OCI-LY7 (cell line): ENCODE measurements at regions of chr2 and their contacts with region 1.

Region 1: DNA sequence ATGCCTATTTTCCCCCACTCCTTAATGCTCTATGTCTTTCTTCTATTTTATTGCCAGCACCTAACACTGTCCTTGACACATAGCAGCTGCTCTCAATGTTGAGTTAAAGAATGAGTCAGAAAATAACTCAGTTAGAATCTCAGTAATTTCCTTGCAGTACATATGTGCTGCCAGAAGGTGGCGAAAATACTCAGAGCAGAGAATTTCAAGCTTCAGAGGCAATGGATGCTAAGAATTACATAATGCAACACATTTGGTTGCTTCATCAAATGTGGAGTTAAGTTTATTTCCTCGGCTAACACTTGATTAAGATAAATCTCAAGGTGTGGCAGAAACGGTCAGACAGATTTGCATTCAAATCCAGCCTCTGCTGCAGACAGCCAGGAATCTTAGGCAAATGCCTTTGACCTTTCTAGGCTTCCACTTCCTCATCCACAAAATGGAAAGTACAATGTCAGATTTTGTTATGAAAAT is 105.6 kb downstream of the VSNL1 start:
- DNase-seq: peak; percentile 68
- H3K4me3 ChIP-seq: no peak overlapping the region
- H3K27ac ChIP-seq: no peak overlapping the region
- H3K4me1 ChIP-seq: peaks cover 5% of the 10 kb centered on the region
- CTCF ChIP-seq: peak; percentile 97

Region 2: GRCh38 chr2:17104454-17104853 is 541.7 kb before region 1 on chr2:
- CTCF ChIA-PET with region 1: no interaction called
- POLR2A ChIA-PET with region 1: no interaction called
- intact Hi-C with region 1: no loop called
- DNase-seq: no peak
- H3K4me3 ChIP-seq: no peak overlapping the region
- H3K27ac ChIP-seq: no peak overlapping the region
- H3K4me1 ChIP-seq: peaks cover 4% of the 10 kb centered on the region
- CTCF ChIP-seq: no peak

Region 3: GRCh38 chr2:17557596-17557995 is 88.5 kb before region 1 on chr2:
- CTCF ChIA-PET with region 1: no interaction called
- POLR2A ChIA-PET with region 1: no interaction called
- intact Hi-C with region 1: no loop called
- DNase-seq: no peak
- H3K4me3 ChIP-seq: no peak overlapping the region
- H3K27ac ChIP-seq: no peak overlapping the region
- H3K4me1 ChIP-seq: no peaks in the 10 kb centered on the region
- CTCF ChIP-seq: no peak

Region 4: GRCh38 chr2:17918789-17919188 is 272.7 kb after region 1 on chr2:
- CTCF ChIA-PET with region 1: no interaction called
- POLR2A ChIA-PET with region 1: no interaction called
- intact Hi-C with region 1: loop called (anchors 5 kb)
- DNase-seq: peak; percentile 17
- H3K4me3 ChIP-seq: no peak overlapping the region
- H3K27ac ChIP-seq: no peak overlapping the region
- H3K4me1 ChIP-seq: peaks cover 13% of the 10 kb centered on the region
- CTCF ChIP-seq: peak; percentile 50; the same call in 1 of the 2 replicates

Region 5: DNA sequence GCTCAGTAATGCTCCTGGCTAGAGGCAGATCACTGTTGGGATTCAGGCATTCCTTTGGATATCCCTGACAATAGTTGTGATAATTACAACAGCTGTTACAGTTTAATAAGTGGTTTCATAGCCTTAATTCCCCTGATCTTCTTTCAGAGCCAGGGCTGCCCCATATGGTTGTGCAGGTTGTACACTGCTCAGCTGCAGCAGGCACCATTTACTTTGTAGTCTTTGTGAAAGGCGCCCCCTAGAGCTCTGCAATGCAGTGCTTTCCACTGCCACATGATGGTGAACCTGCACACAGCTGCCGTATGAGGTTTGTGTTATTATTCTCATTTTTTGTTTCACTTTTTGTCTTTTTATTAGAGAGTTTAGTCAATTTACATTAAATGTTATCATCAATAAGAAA is 471.5 kb after region 1 on chr2:
- CTCF ChIA-PET with region 1: no interaction called
- POLR2A ChIA-PET with region 1: no interaction called
- intact Hi-C with region 1: loop called (anchors 2 kb)
- DNase-seq: peak; percentile 30
- H3K4me3 ChIP-seq: no peak overlapping the region
- H3K27ac ChIP-seq: no peak overlapping the region
- H3K4me1 ChIP-seq: no peaks in the 10 kb centered on the region
- CTCF ChIP-seq: peak; percentile 71

Region 6: DNA sequence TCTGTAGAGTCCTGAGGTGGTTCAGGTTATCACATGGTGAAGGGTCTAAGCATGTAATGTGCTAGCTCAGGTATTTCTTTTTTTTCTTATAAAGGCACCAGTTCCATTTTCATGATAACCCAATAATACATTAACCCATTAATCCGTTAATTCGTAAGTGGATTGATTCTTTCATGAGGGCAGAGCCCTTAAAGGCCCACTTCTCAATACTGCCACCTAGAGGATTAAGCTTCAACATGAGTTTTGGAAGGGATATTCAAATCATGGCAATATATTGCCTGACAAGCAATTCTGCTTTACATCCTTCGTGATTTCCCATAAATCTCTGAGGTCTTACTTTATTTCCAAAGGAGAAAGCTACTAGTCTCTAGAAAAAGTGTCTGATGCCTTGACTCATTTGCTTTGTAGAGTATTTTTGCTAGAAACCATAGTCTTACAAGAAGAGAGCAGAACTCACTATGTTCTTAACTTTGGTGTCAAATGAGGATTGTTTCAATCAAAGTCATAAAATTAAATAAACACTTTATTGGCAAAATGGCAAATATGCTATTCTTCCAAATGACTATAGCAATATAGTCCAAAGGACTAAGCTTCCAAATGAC is 503.6 kb after region 1 on chr2:
- CTCF ChIA-PET with region 1: no interaction called
- POLR2A ChIA-PET with region 1: no interaction called
- intact Hi-C with region 1: loop called (anchors 1 kb)
- DNase-seq: peak; percentile 64
- H3K4me3 ChIP-seq: no peak overlapping the region
- H3K27ac ChIP-seq: no peak overlapping the region
- H3K4me1 ChIP-seq: no peaks in the 10 kb centered on the region
- CTCF ChIP-seq: peak; percentile 90

Region 7: DNA sequence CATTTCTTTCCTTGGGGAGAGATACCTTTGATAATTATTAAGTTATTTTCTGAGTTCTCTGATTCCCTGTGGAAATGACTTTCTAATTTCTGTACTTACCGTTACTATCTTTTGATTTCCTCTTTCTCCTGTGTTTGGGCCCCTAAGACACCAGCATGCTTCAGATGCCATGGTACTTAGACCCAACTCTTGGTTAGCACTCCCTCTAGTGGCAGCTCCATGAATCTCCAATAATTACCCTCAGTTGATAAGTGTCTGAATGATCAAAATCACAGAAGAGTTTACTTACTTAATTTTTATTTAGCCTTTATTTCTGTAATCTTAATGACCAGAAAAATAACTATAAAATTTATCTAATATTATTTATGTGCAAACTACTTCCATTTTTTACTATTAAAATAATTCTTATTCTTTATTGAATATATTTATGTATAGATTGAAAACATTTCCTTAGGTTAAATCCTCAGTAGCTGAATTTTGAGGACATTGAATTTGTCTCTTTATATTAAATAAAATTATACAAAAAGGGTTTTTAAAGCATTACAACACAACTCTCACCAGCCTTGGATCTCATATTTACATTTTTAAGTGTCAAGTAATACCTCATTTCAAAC is 532.7 kb after region 1 on chr2:
- CTCF ChIA-PET with region 1: no interaction called
- POLR2A ChIA-PET with region 1: no interaction called
- intact Hi-C with region 1: loop called (anchors 2 kb)
- DNase-seq: peak; percentile 68
- H3K4me3 ChIP-seq: no peak overlapping the region
- H3K27ac ChIP-seq: no peak overlapping the region
- H3K4me1 ChIP-seq: no peaks in the 10 kb centered on the region
- CTCF ChIP-seq: peak; percentile 95